HepG2 (cell line): ENCODE measurements at regions of chr3 and their contacts with region 1.

Region 1: DNA sequence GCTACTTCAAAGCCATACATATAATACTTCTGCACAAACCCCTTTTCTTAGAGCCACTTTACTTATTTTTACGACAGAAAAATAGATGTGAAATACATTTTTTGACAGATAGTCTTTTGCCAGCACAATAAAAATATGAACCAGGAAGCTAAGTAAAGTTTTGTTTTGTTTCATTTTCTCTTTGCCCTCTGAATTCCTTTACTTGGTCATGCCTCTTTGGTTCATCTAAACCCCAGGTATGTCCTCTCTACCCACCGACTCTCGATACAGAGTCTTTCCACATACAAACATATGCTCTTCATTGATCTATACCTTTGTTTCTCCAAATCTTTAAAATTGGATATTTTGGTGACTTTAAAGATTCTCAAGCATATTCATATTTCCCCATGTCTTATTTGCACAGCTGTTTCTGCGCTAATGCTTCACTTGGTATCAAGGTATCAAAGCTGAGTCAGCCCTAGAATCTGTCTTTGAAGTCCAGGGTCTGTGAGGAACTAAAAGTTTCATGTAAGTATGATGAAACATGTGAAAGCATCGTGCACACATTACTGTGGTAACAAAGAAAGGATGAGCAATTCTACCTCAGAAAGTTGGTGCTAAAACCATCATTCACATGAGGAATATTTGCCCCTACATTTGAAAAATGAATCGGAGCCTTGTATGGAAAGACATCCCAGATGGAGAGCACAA is 845.4 kb downstream of the NAALADL2 start:
- DNase-seq: no peak
- ATAC-seq: no peak
- H3K4me3 ChIP-seq: no peak overlapping the region
- H3K27ac ChIP-seq: no peak overlapping the region
- H3K4me1 ChIP-seq: no peaks in the 10 kb centered on the region
- H3K27me3 ChIP-seq: no peaks in the 10 kb centered on the region
- CTCF ChIP-seq: no peak
- EP300 ChIP-seq: no peak
- POLR2A ChIP-seq: no peak
- RAD21 ChIP-seq: no peak

Region 2: GRCh38 chr3:175735880-175736279 is 31.4 kb after region 1 on chr3:
- CTCF ChIA-PET with region 1: no interaction called
- POLR2A ChIA-PET with region 1: no interaction called
- in situ Hi-C with region 1: no loop called
- intact Hi-C with region 1: loop called (anchors 1 kb)
- DNase-seq: no peak
- ATAC-seq: no peak
- H3K4me3 ChIP-seq: no peak overlapping the region
- H3K27ac ChIP-seq: no peak overlapping the region
- H3K4me1 ChIP-seq: no peaks in the 10 kb centered on the region
- H3K27me3 ChIP-seq: no peaks in the 10 kb centered on the region
- CTCF ChIP-seq: no peak
- EP300 ChIP-seq: no peak
- POLR2A ChIP-seq: no peak
- RAD21 ChIP-seq: no peak